PC-9 (cell line): ENCODE measurements at regions of chr5 and their contacts with region 1.

Region 1: DNA sequence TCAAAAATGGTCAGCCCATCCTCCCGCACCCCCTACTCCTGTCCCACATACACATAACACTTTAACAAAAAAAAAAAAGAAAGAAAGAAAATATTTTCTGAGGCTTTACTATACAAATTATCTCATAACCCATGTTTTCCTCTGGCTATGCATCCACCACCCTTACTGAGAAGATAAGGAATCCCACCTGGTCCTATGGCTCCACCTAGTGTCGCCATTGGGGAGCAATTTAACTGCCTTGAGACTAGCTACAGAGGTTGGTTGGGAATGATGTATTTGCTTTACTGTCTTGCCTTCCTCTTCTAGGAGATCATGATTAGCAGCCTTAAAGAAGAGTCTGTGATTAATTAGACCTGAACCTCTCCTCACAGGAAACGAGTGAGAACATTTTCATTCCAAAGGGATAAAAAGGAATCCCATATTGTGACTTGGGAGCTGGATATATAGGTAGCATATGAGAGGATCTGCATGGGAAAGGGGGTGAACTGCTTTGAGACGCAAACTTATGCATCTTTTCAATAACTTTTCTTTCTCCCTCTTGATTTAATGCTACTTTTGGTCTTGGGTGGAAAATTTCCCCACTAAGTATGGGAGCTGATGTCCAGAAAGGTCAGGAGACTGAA is 77.7 kb upstream of the SELENOP start:
- DNase-seq: peak; percentile 68 to 84
- H3K4me3 ChIP-seq: no peak overlapping the region
- H3K27ac ChIP-seq: no peak overlapping the region
- H3K4me1 ChIP-seq: peaks cover 8% of the 10 kb centered on the region
- H3K27me3 ChIP-seq: peaks cover 10% of the 10 kb centered on the region; the same call in 1 of the 2 replicates
- CTCF ChIP-seq: peak; percentile 99

Region 2: DNA sequence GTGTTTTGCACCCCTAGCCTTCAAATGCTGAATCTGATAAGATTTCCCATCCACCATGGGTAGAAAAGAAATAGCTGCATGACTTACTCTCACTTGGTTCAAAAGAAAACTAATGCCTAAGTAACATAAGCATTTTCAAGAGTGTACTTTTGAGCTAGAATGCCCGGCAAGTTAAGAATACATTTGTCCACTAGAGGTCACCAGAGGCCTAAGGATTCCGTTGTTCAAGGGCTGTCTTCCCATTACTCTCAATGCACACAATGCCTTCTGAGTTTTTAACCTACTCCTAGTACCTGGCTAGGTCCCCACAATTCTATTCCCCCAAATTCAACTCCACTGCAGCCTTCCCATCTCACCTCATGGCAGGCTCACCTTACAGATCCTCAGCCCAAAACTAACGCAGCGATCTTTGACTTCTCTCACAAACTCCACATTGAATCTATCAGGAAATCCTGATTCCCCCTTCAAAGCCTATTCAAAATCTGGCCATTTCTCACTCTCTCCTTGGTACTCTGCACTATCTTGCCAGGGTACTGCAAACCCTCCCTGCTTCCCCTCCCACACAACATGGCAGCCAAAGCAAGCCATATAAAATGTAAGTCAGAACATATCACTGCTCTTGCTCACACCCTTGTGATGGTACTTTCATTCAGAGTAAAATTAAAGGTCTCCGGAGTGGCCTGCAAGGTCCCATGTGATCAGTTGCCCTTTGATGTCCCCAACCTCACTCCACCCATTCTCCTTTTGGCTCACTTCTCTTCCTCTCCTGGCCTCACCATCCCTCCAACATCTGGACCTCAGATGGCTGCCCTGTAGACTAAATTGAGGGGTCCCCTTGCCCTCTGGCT is 1032.6 kb before region 1 on chr5:
- CTCF ChIA-PET with region 1: interaction called, 14 read pairs
- POLR2A ChIA-PET with region 1: no interaction called
- intact Hi-C with region 1: loop called (anchors 1 kb)
- DNase-seq: peak; percentile 46 to 66
- H3K4me3 ChIP-seq: no peak overlapping the region
- H3K27ac ChIP-seq: no peak overlapping the region
- H3K4me1 ChIP-seq: no peaks in the 10 kb centered on the region
- H3K27me3 ChIP-seq: no peaks in the 10 kb centered on the region
- CTCF ChIP-seq: peak; percentile 90

Region 3: DNA sequence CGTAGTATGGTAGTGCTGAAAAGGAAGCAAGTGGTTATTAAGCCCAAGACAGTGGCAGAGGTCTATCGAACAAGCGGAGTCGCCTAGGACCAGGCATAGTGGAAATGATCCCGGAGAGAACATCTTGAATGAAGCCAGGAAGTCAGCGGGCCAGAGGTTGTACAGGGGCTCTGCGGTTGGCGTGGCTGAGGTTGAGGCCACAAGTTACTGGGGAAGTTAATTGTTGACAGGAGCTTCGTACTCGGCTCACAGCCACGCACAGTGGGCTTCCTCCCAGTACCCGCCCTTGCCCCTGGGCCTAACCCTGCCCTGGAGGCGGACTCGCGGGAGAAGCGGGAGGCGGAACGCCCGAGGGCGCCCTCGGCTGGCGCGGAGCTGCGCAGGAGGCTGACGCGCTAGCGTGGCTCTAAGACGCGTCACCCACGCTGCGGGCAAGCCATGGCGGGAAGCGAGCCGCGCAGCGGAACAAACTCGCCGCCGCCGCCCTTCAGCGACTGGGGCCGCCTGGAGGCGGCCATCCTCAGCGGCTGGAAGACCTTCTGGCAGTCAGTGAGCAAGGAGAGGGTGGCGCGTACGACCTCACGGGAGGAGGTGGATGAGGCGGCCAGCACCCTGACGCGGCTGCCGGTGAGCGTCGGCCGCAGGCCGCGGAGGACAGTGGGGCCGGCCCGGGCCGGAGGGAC is 964.4 kb before region 1 on chr5 and contains the start of gene FBXO4:
- CTCF ChIA-PET with region 1: interaction called, 4 read pairs
- POLR2A ChIA-PET with region 1: no interaction called
- intact Hi-C with region 1: loop called (anchors 5 kb)
- DNase-seq: peak; percentile 71 to 92
- H3K4me3 ChIP-seq: peak within 1 kb of the TSS; percentile 86
- H3K27ac ChIP-seq: peak within 1 kb of the TSS; percentile 18
- H3K4me1 ChIP-seq: peaks cover 23% of the 10 kb centered on the region
- H3K27me3 ChIP-seq: no peaks in the 10 kb centered on the region
- CTCF ChIP-seq: no peak; the same call in 1 of the 2 replicates
- total RNA-seq, gene FBXO4: 27.8 and 30.4 TPM in 2 replicates

Region 4: GRCh38 chr5:42057254-42057690 is 832.1 kb before region 1 on chr5:
- CTCF ChIA-PET with region 1: interaction called, 17 read pairs
- POLR2A ChIA-PET with region 1: no interaction called
- intact Hi-C with region 1: loop called (anchors 1 kb)
- DNase-seq: peak; percentile 46 to 60
- H3K4me3 ChIP-seq: no peak overlapping the region
- H3K27ac ChIP-seq: no peak overlapping the region
- H3K4me1 ChIP-seq: no peaks in the 10 kb centered on the region
- H3K27me3 ChIP-seq: no peaks in the 10 kb centered on the region
- CTCF ChIP-seq: peak; percentile 97

Region 5: DNA sequence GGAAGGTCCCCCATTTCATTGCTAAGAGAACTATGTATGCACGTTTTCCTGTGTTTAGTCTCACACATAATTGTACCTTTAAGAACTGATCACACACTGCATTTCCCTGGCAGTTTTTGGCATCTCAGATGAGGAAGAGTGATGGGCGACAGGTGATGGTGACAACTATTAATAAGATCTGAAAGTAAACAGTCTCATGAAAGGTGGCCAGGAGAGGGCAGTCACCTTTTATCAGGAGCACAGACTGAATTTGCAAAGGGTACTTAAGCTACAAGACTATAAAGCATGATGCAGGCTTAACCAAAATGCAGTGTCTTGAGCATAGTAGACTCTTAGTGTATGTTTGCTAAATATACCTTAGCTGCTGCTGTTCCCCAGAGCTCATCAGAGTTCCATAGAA is 374.7 kb before region 1 on chr5:
- CTCF ChIA-PET with region 1: no interaction called
- POLR2A ChIA-PET with region 1: no interaction called
- intact Hi-C with region 1: loop called (anchors 10 kb)
- DNase-seq: peak in 1 of 2 experiments; percentile 13
- H3K4me3 ChIP-seq: no peak overlapping the region
- H3K27ac ChIP-seq: no peak overlapping the region
- H3K4me1 ChIP-seq: no peaks in the 10 kb centered on the region
- H3K27me3 ChIP-seq: no peaks in the 10 kb centered on the region
- CTCF ChIP-seq: peak; percentile 50; the same call in 1 of the 2 replicates

Region 6: GRCh38 chr5:42767491-42768105 is 121.8 kb before region 1 on chr5:
- CTCF ChIA-PET with region 1: interaction called, 3 read pairs
- POLR2A ChIA-PET with region 1: no interaction called
- intact Hi-C with region 1: loop called (anchors 1 kb)
- DNase-seq: no peak
- H3K4me3 ChIP-seq: no peak overlapping the region
- H3K27ac ChIP-seq: no peak overlapping the region
- H3K4me1 ChIP-seq: peaks cover 1% of the 10 kb centered on the region; the same call in 1 of the 2 replicates
- H3K27me3 ChIP-seq: no peaks in the 10 kb centered on the region
- CTCF ChIP-seq: peak; percentile 86